Tibial artery (tissue), 4 donors: ENCODE measurements at regions of chr6 and their contacts with region 1.

Region 1: GRCh38 chr6:157274471-157275226 is 48.7 kb downstream of the TMEM242 start:
- DNase-seq: peak; percentile 78 to 92
- H3K4me3 ChIP-seq: peak overlapping the region; percentile 65 to 67
- H3K27ac ChIP-seq: peak overlapping the region; percentile 90 to 96
- H3K4me1 ChIP-seq: peaks cover 0 to 43% (median 31%) of the 10 kb centered on the region in 4 donors
- H3K27me3 ChIP-seq: no peaks in the 10 kb centered on the region
- CTCF ChIP-seq: peak; percentile 67 to 98

Region 2: DNA sequence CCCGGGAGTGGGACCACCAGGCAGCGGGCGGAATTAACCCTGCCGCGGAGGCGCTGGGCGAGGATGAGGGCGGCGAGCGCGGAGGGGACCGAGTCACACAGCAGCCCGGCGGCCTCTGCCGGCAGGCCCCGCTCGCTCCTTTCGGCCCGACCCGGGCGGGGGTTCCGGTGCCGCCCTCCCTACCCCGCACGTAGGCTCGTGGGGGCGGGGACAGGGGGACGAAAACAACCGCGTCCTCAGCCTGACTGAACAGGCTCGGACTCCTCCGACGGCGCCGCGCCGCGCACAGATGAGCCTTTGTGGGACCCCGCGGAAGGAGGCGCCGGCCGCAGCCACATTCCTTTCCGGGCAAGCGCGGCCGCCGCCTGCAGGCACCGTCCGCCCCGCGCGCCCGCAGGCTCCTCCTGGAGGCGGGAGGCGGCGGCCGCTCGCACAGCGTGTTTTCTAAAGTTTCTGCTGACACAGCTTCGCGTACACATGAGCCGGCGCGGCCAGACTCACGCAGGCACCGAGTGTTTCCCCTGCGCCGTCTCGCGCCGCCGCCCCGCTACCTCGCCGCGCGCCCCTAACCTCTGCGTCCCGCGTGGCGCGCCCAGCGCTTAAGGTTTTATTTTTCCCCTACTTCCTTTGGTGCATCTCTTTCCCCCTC is 253.2 kb before region 1 on chr6:
- intact Hi-C with region 1: loop called (anchors 5 kb)
- DNase-seq: peak; percentile 94 to 96
- H3K4me3 ChIP-seq: peak overlapping the region; percentile 68 to 90
- H3K27ac ChIP-seq: peak overlapping the region; percentile 95 to 98
- H3K4me1 ChIP-seq: peaks cover 3 to 59% (median 20%) of the 10 kb centered on the region in 4 donors
- H3K27me3 ChIP-seq: no peaks in the 10 kb centered on the region
- CTCF ChIP-seq: peak; percentile 40

Region 3: DNA sequence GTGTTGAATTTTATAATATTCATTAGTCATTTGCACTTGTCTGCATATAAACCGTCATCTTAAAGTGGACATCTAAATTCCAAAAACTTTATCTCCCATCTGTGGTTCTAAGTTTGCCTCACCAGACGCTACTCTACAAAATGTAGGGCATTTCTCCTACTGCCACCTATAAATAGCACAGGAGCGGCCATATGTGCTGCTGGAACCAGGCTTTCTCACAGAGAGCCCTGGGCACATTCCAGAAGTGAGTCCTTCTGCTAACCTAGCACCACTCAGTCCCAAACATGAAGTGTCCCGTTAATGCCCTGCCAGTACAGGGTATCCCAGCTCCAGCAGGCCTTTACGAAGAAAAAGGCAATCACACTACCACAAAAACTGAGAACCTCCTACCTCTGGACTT is 105.0 kb before region 1 on chr6:
- intact Hi-C with region 1: no loop called
- DNase-seq: no peak
- H3K4me3 ChIP-seq: no peak overlapping the region
- H3K27ac ChIP-seq: peak overlapping the region; percentile 3 to 29
- H3K4me1 ChIP-seq: peaks cover 0 to 26% (median 9%) of the 10 kb centered on the region in 4 donors
- H3K27me3 ChIP-seq: no peaks in the 10 kb centered on the region
- CTCF ChIP-seq: no peak

Region 4: DNA sequence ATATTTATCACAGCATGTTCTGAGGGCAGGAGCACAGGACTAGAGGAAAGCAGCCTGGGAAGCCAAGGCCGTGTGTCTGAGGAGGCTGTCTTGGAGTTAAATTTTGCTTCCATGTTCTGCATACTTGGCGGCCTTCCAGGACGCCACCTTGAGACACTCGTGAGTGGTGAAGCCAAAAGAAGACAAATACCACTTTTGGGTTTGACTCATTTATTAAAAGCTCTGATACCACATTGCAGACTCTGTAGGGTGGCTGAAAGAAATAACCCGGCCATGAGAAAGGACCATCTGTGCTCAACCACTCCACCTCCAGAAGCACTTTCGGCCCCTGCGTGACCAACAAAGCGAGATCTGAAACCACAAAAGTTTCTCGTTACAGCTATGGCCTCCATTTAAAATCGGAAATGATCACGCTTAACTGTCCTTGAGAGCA is 71.3 kb before region 1 on chr6:
- intact Hi-C with region 1: loop called (anchors 5 kb)
- DNase-seq: no peak
- H3K4me3 ChIP-seq: no peak overlapping the region
- H3K27ac ChIP-seq: no peak overlapping the region
- H3K4me1 ChIP-seq: peaks cover 0 to 47% (median 17%) of the 10 kb centered on the region in 4 donors
- H3K27me3 ChIP-seq: no peaks in the 10 kb centered on the region
- CTCF ChIP-seq: no peak

Region 5: GRCh38 chr6:157235600-157236039 is 39.0 kb before region 1 on chr6:
- intact Hi-C with region 1: loop called (anchors 5 kb)
- DNase-seq: peak; percentile 70 to 89
- H3K4me3 ChIP-seq: peak overlapping the region; percentile 58 to 62
- H3K27ac ChIP-seq: peak overlapping the region; percentile 94 to 99
- H3K4me1 ChIP-seq: peaks cover 3 to 58% (median 31%) of the 10 kb centered on the region in 4 donors
- H3K27me3 ChIP-seq: no peaks in the 10 kb centered on the region
- CTCF ChIP-seq: peak; percentile 68 to 79

Region 6: DNA sequence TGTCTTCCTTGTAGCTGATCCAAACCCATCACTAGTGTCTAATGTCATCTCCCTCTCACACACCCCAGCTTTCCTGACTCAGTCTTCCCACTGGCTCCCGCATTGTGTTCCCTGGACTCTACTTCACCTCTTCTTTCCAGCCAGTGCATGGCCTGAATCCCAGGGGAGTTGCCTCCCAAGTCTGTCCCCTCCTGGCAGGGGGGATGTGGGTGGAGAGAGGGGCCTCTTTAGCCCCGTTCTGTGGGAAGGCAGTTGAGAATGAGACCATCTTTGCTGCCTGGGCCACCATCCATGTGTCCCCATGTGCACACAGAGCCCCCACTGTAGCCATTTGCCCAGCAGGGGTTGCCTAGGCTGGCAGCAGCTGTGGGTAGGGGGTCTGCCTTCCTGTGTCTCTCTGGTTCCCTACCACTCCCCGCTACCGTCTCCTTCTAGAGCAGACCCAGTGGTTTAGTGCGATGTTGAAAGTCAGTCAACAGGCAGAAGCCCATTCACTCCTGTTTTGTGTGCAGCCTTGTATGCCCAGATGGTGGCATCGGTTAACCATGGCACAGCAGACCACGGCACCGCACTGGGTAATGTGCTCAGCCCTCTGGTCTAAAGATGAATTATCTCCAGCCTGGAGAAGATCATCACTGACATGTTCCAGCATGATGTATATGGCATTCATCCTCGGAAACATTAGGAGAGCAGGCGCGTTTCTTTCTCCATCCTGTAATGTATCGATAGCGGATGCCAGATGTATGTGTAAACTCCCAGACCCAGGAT is 369.6 kb after region 1 on chr6:
- intact Hi-C with region 1: no loop called
- DNase-seq: peak; percentile 40 to 64
- H3K4me3 ChIP-seq: no peak overlapping the region
- H3K27ac ChIP-seq: no peak overlapping the region
- H3K4me1 ChIP-seq: peaks cover 0 to 10% (median 3%) of the 10 kb centered on the region in 4 donors
- H3K27me3 ChIP-seq: no peaks in the 10 kb centered on the region
- CTCF ChIP-seq: peak; percentile 32 to 39